ENCODE measurements at regions of chr12 and their contacts with region 1.

Region 1: GRCh38 chr12:60106214-60106613 is 510.4 kb downstream of the SLC16A7 start:
- DNase-seq: peak; percentile 56
- ATAC-seq: peak; percentile 67
- H3K4me3 ChIP-seq: no peak overlapping the region
- H3K27ac ChIP-seq: no peak overlapping the region
- H3K4me1 ChIP-seq: peaks cover 15% of the 10 kb centered on the region
- H3K27me3 ChIP-seq: no peaks in the 10 kb centered on the region
- CTCF ChIP-seq: peak; percentile 77

Region 2: GRCh38 chr12:59843313-59843712 is 262.9 kb before region 1 on chr12:
- CTCF ChIA-PET with region 1: no interaction called
- POLR2A ChIA-PET with region 1: no interaction called
- intact Hi-C with region 1: loop called (anchors 10 kb)
- DNase-seq: peak; percentile 64
- ATAC-seq: peak; percentile 47
- H3K4me3 ChIP-seq: no peak overlapping the region
- H3K27ac ChIP-seq: peak overlapping the region; percentile 37
- H3K4me1 ChIP-seq: peaks cover 39% of the 10 kb centered on the region
- H3K27me3 ChIP-seq: no peaks in the 10 kb centered on the region
- CTCF ChIP-seq: no peak

Region 3: GRCh38 chr12:60630796-60631195 is 524.6 kb after region 1 on chr12:
- CTCF ChIA-PET with region 1: no interaction called
- POLR2A ChIA-PET with region 1: no interaction called
- intact Hi-C with region 1: no loop called
- DNase-seq: peak; percentile 51
- ATAC-seq: peak; percentile 95
- H3K4me3 ChIP-seq: no peak overlapping the region
- H3K27ac ChIP-seq: no peak overlapping the region
- H3K4me1 ChIP-seq: 0 out of 2 replicates have a peak, but pooled peaks cover 8% of the 10 kb centered on the region
- H3K27me3 ChIP-seq: no peaks in the 10 kb centered on the region
- CTCF ChIP-seq: no peak

Measured in PC-3 (cell line).